ENCODE measurements at regions of chr17 and their contacts with region 1.

Region 1: GRCh38 chr17:82551779-82552457 is 32.4 kb downstream of the FOXK2 start:
- DNase-seq: peak; percentile 49 to 85 (median 77)
- ATAC-seq: peak; percentile 98
- H3K4me3 ChIP-seq: no peak overlapping the region
- H3K4me3 Mint-ChIP-seq: no peak overlapping the region
- H3K27ac ChIP-seq: no peak overlapping the region
- H3K27ac Mint-ChIP-seq: no peak overlapping the region
- H3K4me1 ChIP-seq: peaks cover 26% of the 10 kb centered on the region
- H3K4me1 Mint-ChIP-seq: peaks cover 53% of the 10 kb centered on the region
- H3K27me3 ChIP-seq: no peaks in the 10 kb centered on the region
- H3K27me3 Mint-ChIP-seq: no peaks in the 10 kb centered on the region
- CTCF ChIP-seq: peak; percentile 77

Region 2: DNA sequence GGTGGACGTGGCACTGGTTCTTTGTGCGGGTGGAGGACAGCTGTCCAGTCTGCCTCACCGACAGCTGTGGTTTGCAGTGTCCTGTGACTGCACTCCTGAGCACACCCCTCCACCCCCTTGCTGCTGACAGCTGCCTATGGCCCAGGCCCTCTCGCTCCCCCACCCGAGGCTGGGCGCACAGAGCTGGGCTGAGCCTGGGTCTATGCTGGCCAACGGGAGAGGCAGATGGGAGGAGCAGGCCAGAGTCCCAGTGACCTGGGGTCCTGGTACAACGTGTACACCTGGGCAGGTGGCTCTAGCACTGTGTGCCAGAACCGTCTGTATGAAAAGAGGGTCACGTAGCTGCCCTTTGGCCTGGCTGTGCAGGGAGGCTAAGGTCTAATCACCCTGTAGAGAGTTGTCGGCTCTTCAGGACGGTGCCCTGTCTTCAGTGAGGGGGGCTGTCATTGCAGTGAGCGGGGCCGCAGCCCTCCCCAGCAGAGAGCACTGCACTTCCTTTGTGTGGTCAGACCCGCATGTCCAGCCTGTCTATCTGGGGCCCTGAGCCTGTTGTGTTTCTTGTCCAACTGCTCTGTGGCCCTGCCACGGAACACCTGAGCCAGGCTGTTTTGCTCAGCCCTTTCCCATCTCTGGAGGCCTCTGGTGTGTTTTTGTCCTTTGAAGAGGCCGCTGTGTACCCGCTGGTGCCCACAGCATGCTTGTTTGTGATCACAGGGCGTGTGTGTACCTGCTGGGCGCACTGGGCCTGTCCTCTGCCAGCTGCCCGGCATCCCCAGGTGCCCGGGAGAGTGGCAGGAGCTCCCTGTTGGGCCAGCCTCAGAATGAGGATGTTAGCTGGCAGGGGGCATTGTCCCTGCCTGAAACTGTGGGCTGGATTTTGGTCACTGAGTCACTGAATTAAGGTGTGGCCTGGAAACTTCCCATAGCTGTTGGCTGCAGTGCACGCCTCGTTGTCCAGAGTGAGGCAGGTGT is 1486.1 kb before region 1 on chr17:
- CTCF ChIA-PET with region 1: no interaction called
- POLR2A ChIA-PET with region 1: no interaction called
- intact Hi-C with region 1: no loop called
- DNase-seq: no peak
- ATAC-seq: no peak
- H3K4me3 ChIP-seq: no peak overlapping the region
- H3K4me3 Mint-ChIP-seq: no peak overlapping the region
- H3K27ac ChIP-seq: no peak overlapping the region
- H3K27ac Mint-ChIP-seq: no peak overlapping the region
- H3K4me1 ChIP-seq: no peaks in the 10 kb centered on the region
- H3K4me1 Mint-ChIP-seq: peaks cover 4% of the 10 kb centered on the region
- H3K27me3 ChIP-seq: no peaks in the 10 kb centered on the region
- H3K27me3 Mint-ChIP-seq: no peaks in the 10 kb centered on the region
- CTCF ChIP-seq: no peak

Region 3: DNA sequence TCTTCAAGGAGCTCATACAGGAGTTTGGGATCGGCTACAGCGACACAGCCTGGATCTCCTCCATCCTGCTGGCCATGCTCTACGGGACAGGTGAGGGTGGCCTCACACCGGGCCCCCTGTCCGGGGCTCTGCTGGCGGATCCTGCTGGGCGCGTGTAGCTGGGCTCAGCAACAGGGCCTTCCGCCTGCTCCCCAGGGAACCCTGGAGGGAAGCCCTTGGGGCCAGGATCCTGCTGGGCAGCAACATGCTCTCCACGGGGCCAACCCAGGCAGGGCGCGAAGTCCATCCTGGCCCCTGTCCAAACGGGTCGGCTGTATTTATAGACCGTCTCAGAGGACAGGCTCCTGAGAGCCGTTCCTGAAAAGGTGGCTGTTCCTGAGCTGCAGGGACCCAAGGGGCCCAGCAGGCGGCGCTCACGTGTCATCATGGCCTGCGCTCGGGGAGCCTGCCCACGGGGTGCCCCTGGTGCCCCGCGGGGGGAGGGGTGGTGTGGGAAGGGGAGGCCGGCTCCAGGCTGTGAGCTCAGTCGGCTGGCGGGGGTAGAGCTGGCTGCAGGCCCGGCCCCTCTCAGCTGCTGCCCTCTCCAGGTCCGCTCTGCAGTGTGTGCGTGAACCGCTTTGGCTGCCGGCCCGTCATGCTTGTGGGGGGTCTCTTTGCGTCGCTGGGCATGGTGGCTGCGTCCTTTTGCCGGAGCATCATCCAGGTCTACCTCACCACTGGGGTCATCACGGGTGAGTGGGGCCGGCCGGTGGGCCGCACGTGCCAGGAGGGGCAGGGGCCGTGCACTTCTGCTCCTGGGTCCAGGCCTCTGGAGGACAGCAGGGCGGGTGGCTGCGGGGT is 315.6 kb before region 1 on chr17:
- CTCF ChIA-PET with region 1: no interaction called
- POLR2A ChIA-PET with region 1: no interaction called
- intact Hi-C with region 1: loop called in 1 of 2 experiments (anchors 5 kb)
- DNase-seq: peak in 8 of 9 experiments; percentile 56 to 82 (median 72)
- ATAC-seq: peak; percentile 52
- H3K4me3 ChIP-seq: no peak overlapping the region
- H3K4me3 Mint-ChIP-seq: no peak overlapping the region
- H3K27ac ChIP-seq: peak overlapping the region in 1 of 2 experiments; percentile 6
- H3K27ac Mint-ChIP-seq: peak overlapping the region; percentile 55
- H3K4me1 ChIP-seq: peaks cover 54% of the 10 kb centered on the region
- H3K4me1 Mint-ChIP-seq: peaks cover 40% of the 10 kb centered on the region
- H3K27me3 ChIP-seq: no peaks in the 10 kb centered on the region
- H3K27me3 Mint-ChIP-seq: no peaks in the 10 kb centered on the region
- CTCF ChIP-seq: peak; percentile 82

Region 4: GRCh38 chr17:82351716-82352488 is 200.0 kb before region 1 on chr17:
- CTCF ChIA-PET with region 1: interaction called, 48 read pairs
- POLR2A ChIA-PET with region 1: no interaction called
- intact Hi-C with region 1: loop called (anchors 1 kb)
- DNase-seq: peak; percentile 54 to 89 (median 82)
- ATAC-seq: peak; percentile 90
- H3K4me3 ChIP-seq: no peak overlapping the region
- H3K4me3 Mint-ChIP-seq: no peak overlapping the region
- H3K27ac ChIP-seq: no peak overlapping the region
- H3K27ac Mint-ChIP-seq: no peak overlapping the region
- H3K4me1 ChIP-seq: no peaks in the 10 kb centered on the region
- H3K4me1 Mint-ChIP-seq: no peaks in the 10 kb centered on the region
- H3K27me3 ChIP-seq: peaks cover 0 to under 1% of the 10 kb centered on the region in 2 experiments
- H3K27me3 Mint-ChIP-seq: peaks cover 11% of the 10 kb centered on the region
- CTCF ChIP-seq: peak; percentile 93

Region 5: GRCh38 chr17:82494236-82495055 is 57.5 kb before region 1 on chr17:
- CTCF ChIA-PET with region 1: interaction called, 5 read pairs
- POLR2A ChIA-PET with region 1: no interaction called
- intact Hi-C with region 1: loop called (anchors 1 to 5 kb)
- DNase-seq: peak; percentile 79 to 94 (median 90)
- ATAC-seq: peak; percentile 76
- H3K4me3 ChIP-seq: no peak overlapping the region
- H3K4me3 Mint-ChIP-seq: peak overlapping the region; percentile 68
- H3K27ac ChIP-seq: peak overlapping the region in 1 of 2 experiments; percentile 57
- H3K27ac Mint-ChIP-seq: peak overlapping the region; percentile 80
- H3K4me1 ChIP-seq: peaks cover 19% of the 10 kb centered on the region
- H3K4me1 Mint-ChIP-seq: peaks cover 24% of the 10 kb centered on the region
- H3K27me3 ChIP-seq: no peaks in the 10 kb centered on the region
- H3K27me3 Mint-ChIP-seq: no peaks in the 10 kb centered on the region
- CTCF ChIP-seq: peak; percentile 67

Region 6: GRCh38 chr17:82518826-82519810 is 32.8 kb before region 1 on chr17 and contains the start of gene FOXK2:
- CTCF ChIA-PET with region 1: interaction called, 4 read pairs
- POLR2A ChIA-PET with region 1: no interaction called
- intact Hi-C with region 1: loop called in 1 of 2 experiments (anchors 5 kb)
- DNase-seq: peak; percentile 86 to 98 (median 92)
- ATAC-seq: peak; percentile 98
- H3K4me3 ChIP-seq: peak within 1 kb of the TSS; percentile 56 to 84
- H3K4me3 Mint-ChIP-seq: peak within 1 kb of the TSS; percentile 86
- H3K27ac ChIP-seq: peak within 1 kb of the TSS; percentile 84 to 85
- H3K27ac Mint-ChIP-seq: peak within 1 kb of the TSS; percentile 89
- H3K4me1 ChIP-seq: peaks cover 17% of the 10 kb centered on the region
- H3K4me1 Mint-ChIP-seq: peaks cover 31% of the 10 kb centered on the region
- H3K27me3 ChIP-seq: no peaks in the 10 kb centered on the region
- H3K27me3 Mint-ChIP-seq: no peaks in the 10 kb centered on the region
- CTCF ChIP-seq: no peak
- total RNA-seq, gene FOXK2: 36.1 to 37.7 TPM

Region 7: GRCh38 chr17:82536512-82537201 is 15.3 kb before region 1 on chr17:
- CTCF ChIA-PET with region 1: interaction called, 23 read pairs
- POLR2A ChIA-PET with region 1: no interaction called
- intact Hi-C with region 1: no loop called
- DNase-seq: no peak
- ATAC-seq: no peak
- H3K4me3 ChIP-seq: no peak overlapping the region
- H3K4me3 Mint-ChIP-seq: no peak overlapping the region
- H3K27ac ChIP-seq: no peak overlapping the region
- H3K27ac Mint-ChIP-seq: peak overlapping the region; percentile 7
- H3K4me1 ChIP-seq: peaks cover 14% of the 10 kb centered on the region
- H3K4me1 Mint-ChIP-seq: peaks cover 57% of the 10 kb centered on the region
- H3K27me3 ChIP-seq: no peaks in the 10 kb centered on the region
- H3K27me3 Mint-ChIP-seq: no peaks in the 10 kb centered on the region
- CTCF ChIP-seq: no peak

Measured in CD8-positive, alpha-beta T cell (primary cell).